WTC11 (cell line): ENCODE measurements at regions of chr1 and their contacts with region 1.

Region 1: GRCh38 chr1:12124693-12125421 is 41.9 kb upstream of the TNFRSF1B start:
- DNase-seq: peak; percentile 78
- ATAC-seq: peak; percentile 40; the same call in 1 of the 2 replicates
- H3K4me3 Mint-ChIP-seq: no peak overlapping the region
- H3K27ac Mint-ChIP-seq: 0 out of 2 replicates have a peak overlapping the region, but pooled peaks have one; percentile 33
- H3K4me1 Mint-ChIP-seq: peaks cover 3% of the 10 kb centered on the region; the same call in 1 of the 2 replicates
- H3K27me3 Mint-ChIP-seq: no peaks in the 10 kb centered on the region
- CTCF ChIP-seq: peak; percentile 97

Region 2: GRCh38 chr1:11784993-11785769 is 339.7 kb before region 1 on chr1:
- CTCF ChIA-PET with region 1: no interaction called
- POLR2A ChIA-PET with region 1: no interaction called
- DNase-seq: peak; percentile 92
- ATAC-seq: peak; percentile 88
- H3K4me3 Mint-ChIP-seq: peak overlapping the region; percentile 30; the same call in 1 of the 2 replicates
- H3K27ac Mint-ChIP-seq: peak overlapping the region; percentile 70; the same call in 1 of the 2 replicates
- H3K4me1 Mint-ChIP-seq: peaks cover 32% of the 10 kb centered on the region
- H3K27me3 Mint-ChIP-seq: no peaks in the 10 kb centered on the region
- CTCF ChIP-seq: peak; percentile 88

Region 3: GRCh38 chr1:12019858-12020509 is 104.9 kb before region 1 on chr1:
- CTCF ChIA-PET with region 1: no interaction called
- POLR2A ChIA-PET with region 1: no interaction called
- DNase-seq: no peak
- ATAC-seq: no peak
- H3K4me3 Mint-ChIP-seq: peak overlapping the region; percentile 88
- H3K27ac Mint-ChIP-seq: peak overlapping the region; percentile 79
- H3K4me1 Mint-ChIP-seq: peaks cover 4% of the 10 kb centered on the region
- H3K27me3 Mint-ChIP-seq: no peaks in the 10 kb centered on the region; the same call in 1 of the 2 replicates
- CTCF ChIP-seq: no peak

Region 4: GRCh38 chr1:12078938-12079861 is 45.7 kb before region 1 on chr1:
- CTCF ChIA-PET with region 1: interaction called, 14 read pairs
- POLR2A ChIA-PET with region 1: no interaction called
- DNase-seq: peak; percentile 76
- ATAC-seq: peak; percentile 79
- H3K4me3 Mint-ChIP-seq: peak overlapping the region; percentile 54
- H3K27ac Mint-ChIP-seq: peak overlapping the region; percentile 76
- H3K4me1 Mint-ChIP-seq: peaks cover 38% of the 10 kb centered on the region
- H3K27me3 Mint-ChIP-seq: no peaks in the 10 kb centered on the region
- CTCF ChIP-seq: 0 out of 2 replicates have a peak, but pooled peaks have one; percentile 39

Region 5: GRCh38 chr1:12141128-12141850 is 16.4 kb after region 1 on chr1:
- CTCF ChIA-PET with region 1: interaction called, 20 read pairs
- POLR2A ChIA-PET with region 1: no interaction called
- DNase-seq: no peak
- ATAC-seq: no peak
- H3K4me3 Mint-ChIP-seq: no peak overlapping the region
- H3K27ac Mint-ChIP-seq: no peak overlapping the region
- H3K4me1 Mint-ChIP-seq: no peaks in the 10 kb centered on the region; the same call in 1 of the 2 replicates
- H3K27me3 Mint-ChIP-seq: no peaks in the 10 kb centered on the region
- CTCF ChIP-seq: no peak

Region 6: GRCh38 chr1:12166834-12167492 is 42.1 kb after region 1 on chr1 and contains the start of gene TNFRSF1B:
- CTCF ChIA-PET with region 1: interaction called, 19 read pairs
- POLR2A ChIA-PET with region 1: no interaction called
- DNase-seq: peak; percentile 67
- ATAC-seq: peak; percentile 90
- H3K4me3 Mint-ChIP-seq: peak within 1 kb of the TSS; percentile 69
- H3K27ac Mint-ChIP-seq: no peak within 1 kb of the TSS
- H3K4me1 Mint-ChIP-seq: peaks cover 17% of the 10 kb centered on the region
- H3K27me3 Mint-ChIP-seq: peaks cover 47% of the 10 kb centered on the region
- CTCF ChIP-seq: no peak
- total RNA-seq, gene TNFRSF1B: 1.6 to 2.7 TPM (median 2.1 TPM) in 3 replicates

Region 7: DNA sequence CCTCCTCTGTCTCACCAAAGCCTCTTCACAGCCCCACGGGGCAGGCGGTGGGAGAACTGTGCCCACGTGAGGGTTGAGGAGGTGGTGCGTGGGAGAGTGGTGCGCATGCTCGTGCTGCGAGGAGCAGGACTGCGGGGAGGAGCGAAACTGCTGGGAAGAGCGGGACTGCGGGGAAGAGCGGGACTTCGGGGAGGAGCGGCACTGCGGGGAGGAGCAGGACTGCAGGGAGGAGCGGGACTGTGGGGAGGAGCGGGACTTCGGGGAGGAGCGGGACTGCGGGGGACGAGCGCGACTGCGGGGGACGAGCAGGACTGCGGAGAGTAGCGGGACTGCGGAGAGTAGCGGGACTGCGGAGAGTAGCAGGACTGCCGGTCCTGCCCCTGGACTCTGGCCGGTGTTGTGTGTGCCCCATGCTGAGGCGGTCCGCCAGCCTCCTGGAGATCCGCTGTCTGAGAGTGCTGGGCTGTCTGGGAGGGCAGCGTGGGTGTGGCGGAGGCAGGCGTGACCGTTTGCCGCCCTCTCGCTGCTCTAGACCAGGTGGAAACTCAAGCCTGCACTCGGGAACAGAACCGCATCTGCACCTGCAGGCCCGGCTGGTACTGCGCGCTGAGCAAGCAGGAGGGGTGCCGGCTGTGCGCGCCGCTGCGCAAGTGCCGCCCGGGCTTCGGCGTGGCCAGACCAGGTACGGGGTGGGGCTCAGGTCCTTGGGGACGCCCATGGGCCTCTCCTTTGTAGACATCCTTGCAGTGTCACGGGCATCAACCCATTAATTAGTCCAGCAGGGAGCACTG is 66.6 kb after region 1 on chr1:
- CTCF ChIA-PET with region 1: interaction called, 325 read pairs
- POLR2A ChIA-PET with region 1: no interaction called
- DNase-seq: no peak
- ATAC-seq: no peak; the same call in 1 of the 2 replicates
- H3K4me3 Mint-ChIP-seq: no peak overlapping the region
- H3K27ac Mint-ChIP-seq: no peak overlapping the region
- H3K4me1 Mint-ChIP-seq: peaks cover 14% of the 10 kb centered on the region
- H3K27me3 Mint-ChIP-seq: no peaks in the 10 kb centered on the region; the same call in 1 of the 2 replicates
- CTCF ChIP-seq: no peak

Region 8: DNA sequence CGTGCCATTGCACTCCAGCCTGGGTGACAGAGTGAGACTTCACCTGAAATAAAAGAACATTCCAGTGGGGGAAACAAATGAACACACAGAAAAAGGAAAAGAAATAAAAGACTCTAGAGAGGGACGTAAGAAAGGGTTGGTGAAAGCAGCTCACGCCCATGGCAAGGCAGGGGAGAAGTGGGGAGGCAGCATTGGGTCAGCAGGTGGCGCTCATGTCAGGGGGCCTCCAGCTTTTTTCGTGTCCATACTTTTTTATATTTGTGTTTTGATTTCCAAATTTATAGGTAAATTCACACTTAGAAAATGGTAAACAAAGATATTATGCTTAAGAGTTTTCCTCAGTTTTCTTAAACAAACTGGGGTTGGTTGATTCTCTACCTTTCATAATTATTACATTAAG is 150.5 kb after region 1 on chr1:
- CTCF ChIA-PET with region 1: interaction called, 62 read pairs
- POLR2A ChIA-PET with region 1: no interaction called
- DNase-seq: peak; percentile 60
- ATAC-seq: peak; percentile 74
- H3K4me3 Mint-ChIP-seq: no peak overlapping the region
- H3K27ac Mint-ChIP-seq: no peak overlapping the region
- H3K4me1 Mint-ChIP-seq: peaks cover 6% of the 10 kb centered on the region
- H3K27me3 Mint-ChIP-seq: no peaks in the 10 kb centered on the region
- CTCF ChIP-seq: peak; percentile 57

Region 9: GRCh38 chr1:12376106-12377045 is 251.5 kb after region 1 on chr1:
- CTCF ChIA-PET with region 1: no interaction called
- POLR2A ChIA-PET with region 1: no interaction called
- DNase-seq: no peak
- ATAC-seq: no peak
- H3K4me3 Mint-ChIP-seq: no peak overlapping the region
- H3K27ac Mint-ChIP-seq: peak overlapping the region; percentile 58; the same call in 1 of the 2 replicates
- H3K4me1 Mint-ChIP-seq: no peaks in the 10 kb centered on the region
- H3K27me3 Mint-ChIP-seq: no peaks in the 10 kb centered on the region; the same call in 1 of the 2 replicates
- CTCF ChIP-seq: no peak

Region 10: GRCh38 chr1:12496154-12496913 is 371.5 kb after region 1 on chr1:
- CTCF ChIA-PET with region 1: no interaction called
- POLR2A ChIA-PET with region 1: no interaction called
- DNase-seq: no peak
- ATAC-seq: no peak
- H3K4me3 Mint-ChIP-seq: no peak overlapping the region
- H3K27ac Mint-ChIP-seq: no peak overlapping the region
- H3K4me1 Mint-ChIP-seq: peaks cover 7% of the 10 kb centered on the region
- H3K27me3 Mint-ChIP-seq: 0 out of 2 replicates have a peak, but pooled peaks cover 2% of the 10 kb centered on the region
- CTCF ChIP-seq: no peak